Ascending aorta (tissue), 2 donors: ENCODE measurements at regions of chr1 and their contacts with region 1.

Region 1: DNA sequence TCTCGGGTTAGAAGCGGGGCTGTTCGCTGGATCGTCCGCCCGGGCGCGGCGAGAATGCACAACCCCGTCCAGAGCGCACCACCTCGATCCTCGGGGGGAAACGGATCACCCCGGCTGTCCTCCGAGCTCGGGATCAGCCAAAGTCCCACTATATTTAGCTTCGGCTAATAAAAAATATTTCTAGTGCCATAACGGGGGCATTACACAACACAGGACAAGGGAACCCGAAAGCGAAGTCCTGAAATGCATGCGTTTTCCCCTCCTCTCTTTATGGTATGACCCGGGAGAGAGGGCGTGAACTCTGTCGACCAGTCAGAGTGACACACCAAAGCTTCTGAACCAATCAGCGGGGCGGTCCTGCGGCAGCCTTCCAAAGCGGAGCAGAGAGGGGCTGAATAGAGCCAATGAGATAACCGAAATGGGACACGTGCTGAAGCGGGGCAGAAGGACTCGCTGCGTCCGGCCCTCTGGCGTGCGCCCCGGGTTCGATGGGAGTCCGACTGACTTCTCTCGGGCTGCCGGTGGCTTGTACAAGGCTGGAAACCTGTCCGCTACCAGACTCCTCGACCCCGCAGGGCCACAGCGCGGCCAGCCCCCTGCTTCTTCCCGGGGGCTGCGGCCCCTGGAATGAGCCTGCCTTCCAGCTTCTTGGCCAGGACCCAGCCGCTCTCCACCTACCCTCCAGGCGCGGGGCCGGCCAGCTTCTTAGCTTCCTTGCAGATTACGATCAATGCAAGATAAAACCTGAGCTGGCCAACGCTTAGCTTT is at the start of gene ALDH4A1:
- DNase-seq: peak; percentile 97 to 99
- H3K4me3 ChIP-seq: peak within 1 kb of the TSS; percentile 76 to 80
- H3K27ac ChIP-seq: peak within 1 kb of the TSS; percentile 78 to 87
- H3K4me1 ChIP-seq: peaks cover 9 to 19% of the 10 kb centered on the region in 2 donors
- H3K27me3 ChIP-seq: no peaks in the 10 kb centered on the region
- CTCF ChIP-seq: no peak
- total RNA-seq, gene ALDH4A1: 16.6 TPM

Region 2: GRCh38 chr1:18849261-18849711 is 53.4 kb before region 1 on chr1:
- intact Hi-C with region 1: no loop called
- DNase-seq: no peak
- H3K4me3 ChIP-seq: no peak overlapping the region
- H3K27ac ChIP-seq: no peak overlapping the region
- H3K4me1 ChIP-seq: no peaks in the 10 kb centered on the region
- H3K27me3 ChIP-seq: no peaks in the 10 kb centered on the region
- CTCF ChIP-seq: no peak

Region 3: GRCh38 chr1:18926315-18927081 is 23.8 kb after region 1 on chr1:
- intact Hi-C with region 1: loop called (anchors 1 kb)
- DNase-seq: peak; percentile 83 to 95
- H3K4me3 ChIP-seq: peak overlapping the region in 1 of 2 donors; percentile 30
- H3K27ac ChIP-seq: peak overlapping the region; percentile 95 to 97
- H3K4me1 ChIP-seq: peaks cover 39 to 63% of the 10 kb centered on the region in 2 donors
- H3K27me3 ChIP-seq: no peaks in the 10 kb centered on the region
- CTCF ChIP-seq: no peak

Region 4: GRCh38 chr1:18972531-18972930 is 69.8 kb after region 1 on chr1:
- intact Hi-C with region 1: loop called (anchors 1 kb)
- DNase-seq: peak in 1 of 2 donors; percentile 66
- H3K4me3 ChIP-seq: no peak overlapping the region
- H3K27ac ChIP-seq: no peak overlapping the region
- H3K4me1 ChIP-seq: no peaks in the 10 kb centered on the region
- H3K27me3 ChIP-seq: no peaks in the 10 kb centered on the region
- CTCF ChIP-seq: peak; percentile 29 to 69 (median 61)

Region 5: GRCh38 chr1:19074902-19075721 is 172.4 kb after region 1 on chr1:
- intact Hi-C with region 1: loop called (anchors 5 kb)
- DNase-seq: no peak
- H3K4me3 ChIP-seq: no peak overlapping the region
- H3K27ac ChIP-seq: peak overlapping the region in 1 of 2 donors; percentile 28
- H3K4me1 ChIP-seq: peaks cover 4 to 11% of the 10 kb centered on the region in 2 donors
- H3K27me3 ChIP-seq: no peaks in the 10 kb centered on the region
- CTCF ChIP-seq: no peak

Region 6: GRCh38 chr1:19209990-19210771 is 307.5 kb after region 1 on chr1 and contains the start of gene UBR4:
- intact Hi-C with region 1: loop called (anchors 5 kb)
- DNase-seq: peak; percentile 57 to 96
- H3K4me3 ChIP-seq: peak within 1 kb of the TSS; percentile 67 to 75
- H3K27ac ChIP-seq: peak within 1 kb of the TSS; percentile 90 to 95
- H3K4me1 ChIP-seq: peaks cover 6 to 29% of the 10 kb centered on the region in 2 donors
- H3K27me3 ChIP-seq: no peaks in the 10 kb centered on the region
- CTCF ChIP-seq: peak in 1 of 3 experiments; percentile 8
- total RNA-seq, gene UBR4: 222 TPM